Activated CD8-positive, alpha-beta memory T cell treated with anti-CD3 and anti-CD28 coated beads, Interleukin-2, amount 10 ng/mL, durations not matched to agents 7 days and 5 days (primary cell): ENCODE measurements at regions of chr5 and their contacts with region 1.

Region 1: GRCh38 chr5:95822542-95823181 is at the start of gene GLRX:
- DNase-seq: peak; percentile 80
- ATAC-seq: peak; percentile 54
- H3K4me3 Mint-ChIP-seq: peak within 1 kb of the TSS; percentile 93
- H3K27ac Mint-ChIP-seq: peak within 1 kb of the TSS; percentile 90
- H3K4me1 Mint-ChIP-seq: peaks cover 59% of the 10 kb centered on the region
- H3K27me3 Mint-ChIP-seq: no peaks in the 10 kb centered on the region
- total RNA-seq, gene GLRX: 65.3 to 67.1 TPM

Region 2: GRCh38 chr5:95672486-95673469 is 149.9 kb before region 1 on chr5:
- CTCF ChIA-PET with region 1: no interaction called
- DNase-seq: no peak
- ATAC-seq: no peak
- H3K4me3 Mint-ChIP-seq: no peak overlapping the region
- H3K27ac Mint-ChIP-seq: no peak overlapping the region
- H3K4me1 Mint-ChIP-seq: no peaks in the 10 kb centered on the region
- H3K27me3 Mint-ChIP-seq: peaks cover 22% of the 10 kb centered on the region

Region 3: GRCh38 chr5:95773335-95774059 is 49.2 kb before region 1 on chr5:
- CTCF ChIA-PET with region 1: no interaction called
- DNase-seq: no peak
- ATAC-seq: no peak
- H3K4me3 Mint-ChIP-seq: no peak overlapping the region
- H3K27ac Mint-ChIP-seq: no peak overlapping the region
- H3K4me1 Mint-ChIP-seq: peaks cover 6% of the 10 kb centered on the region
- H3K27me3 Mint-ChIP-seq: peaks cover 11% of the 10 kb centered on the region

Region 4: DNA sequence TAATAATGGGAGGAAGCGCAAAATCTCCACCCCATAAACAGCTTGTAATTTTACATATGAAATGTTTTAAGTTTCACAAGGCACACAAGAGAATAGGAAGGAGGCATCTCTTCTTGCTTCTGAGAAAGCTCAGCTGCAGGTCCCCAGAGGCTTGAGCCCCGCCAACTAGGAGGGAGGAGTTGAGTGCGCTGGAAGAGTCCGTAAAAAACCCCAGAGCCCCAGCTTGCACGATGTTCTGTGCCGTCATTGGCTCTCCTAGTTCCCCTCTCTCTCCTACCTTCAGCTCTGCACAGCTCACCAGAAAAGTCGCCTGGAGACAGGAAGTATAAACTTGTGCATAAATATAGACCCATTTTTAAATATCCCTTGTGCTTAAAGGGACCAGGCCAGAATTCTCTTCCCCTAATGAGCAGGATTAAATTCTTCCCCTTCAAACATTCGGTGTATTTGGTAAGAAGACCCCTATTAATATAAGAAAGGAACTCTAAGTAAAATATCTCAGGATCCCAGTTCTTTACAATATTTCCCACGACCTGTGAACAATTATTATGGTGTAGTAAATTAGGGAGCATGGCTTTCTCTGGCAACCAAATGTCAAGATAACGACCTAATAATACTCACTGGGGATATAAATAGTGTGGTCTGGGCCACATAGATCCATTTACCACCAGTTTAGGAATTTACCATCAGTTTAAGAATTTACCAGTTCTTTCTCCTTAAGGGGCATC is 13.8 kb before region 1 on chr5:
- CTCF ChIA-PET with region 1: interaction called, 93 read pairs
- DNase-seq: peak; percentile 91
- ATAC-seq: peak; percentile 100
- H3K4me3 Mint-ChIP-seq: peak overlapping the region; percentile 45
- H3K27ac Mint-ChIP-seq: peak overlapping the region; percentile 86
- H3K4me1 Mint-ChIP-seq: peaks cover 55% of the 10 kb centered on the region
- H3K27me3 Mint-ChIP-seq: no peaks in the 10 kb centered on the region

Region 5: GRCh38 chr5:95835682-95836385 is 13.2 kb after region 1 on chr5:
- CTCF ChIA-PET with region 1: interaction called, 51 read pairs
- DNase-seq: peak; percentile 57
- ATAC-seq: peak; percentile 13
- H3K4me3 Mint-ChIP-seq: peak overlapping the region; percentile 75
- H3K27ac Mint-ChIP-seq: peak overlapping the region; percentile 90
- H3K4me1 Mint-ChIP-seq: peaks cover 42% of the 10 kb centered on the region
- H3K27me3 Mint-ChIP-seq: no peaks in the 10 kb centered on the region

Region 6: DNA sequence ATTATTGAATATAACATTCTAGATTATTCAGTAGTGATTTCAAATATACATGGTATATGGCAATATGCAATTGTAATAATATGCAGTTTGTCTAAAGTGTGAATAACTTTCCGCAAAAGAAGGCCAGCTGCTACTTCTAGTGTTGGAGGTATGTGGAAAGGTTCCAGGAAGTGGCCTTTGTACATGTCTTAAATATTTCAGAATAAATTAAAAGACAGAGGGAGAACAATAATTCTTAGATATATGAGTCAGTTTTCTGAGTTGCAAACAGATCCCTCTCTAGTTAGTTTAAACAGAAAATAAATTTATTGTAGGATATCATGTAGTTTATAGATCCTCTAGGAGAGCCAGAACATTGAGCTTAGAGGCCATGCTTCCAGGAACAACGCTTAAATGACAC is 349.8 kb after region 1 on chr5:
- CTCF ChIA-PET with region 1: no interaction called
- DNase-seq: no peak
- ATAC-seq: no peak
- H3K4me3 Mint-ChIP-seq: no peak overlapping the region
- H3K27ac Mint-ChIP-seq: no peak overlapping the region
- H3K4me1 Mint-ChIP-seq: peaks cover 3% of the 10 kb centered on the region
- H3K27me3 Mint-ChIP-seq: peaks cover 3% of the 10 kb centered on the region